Posterior cingulate gyrus (tissue), 11 donors: ENCODE measurements at regions of chr15 and their contacts with region 1.

Region 1: DNA sequence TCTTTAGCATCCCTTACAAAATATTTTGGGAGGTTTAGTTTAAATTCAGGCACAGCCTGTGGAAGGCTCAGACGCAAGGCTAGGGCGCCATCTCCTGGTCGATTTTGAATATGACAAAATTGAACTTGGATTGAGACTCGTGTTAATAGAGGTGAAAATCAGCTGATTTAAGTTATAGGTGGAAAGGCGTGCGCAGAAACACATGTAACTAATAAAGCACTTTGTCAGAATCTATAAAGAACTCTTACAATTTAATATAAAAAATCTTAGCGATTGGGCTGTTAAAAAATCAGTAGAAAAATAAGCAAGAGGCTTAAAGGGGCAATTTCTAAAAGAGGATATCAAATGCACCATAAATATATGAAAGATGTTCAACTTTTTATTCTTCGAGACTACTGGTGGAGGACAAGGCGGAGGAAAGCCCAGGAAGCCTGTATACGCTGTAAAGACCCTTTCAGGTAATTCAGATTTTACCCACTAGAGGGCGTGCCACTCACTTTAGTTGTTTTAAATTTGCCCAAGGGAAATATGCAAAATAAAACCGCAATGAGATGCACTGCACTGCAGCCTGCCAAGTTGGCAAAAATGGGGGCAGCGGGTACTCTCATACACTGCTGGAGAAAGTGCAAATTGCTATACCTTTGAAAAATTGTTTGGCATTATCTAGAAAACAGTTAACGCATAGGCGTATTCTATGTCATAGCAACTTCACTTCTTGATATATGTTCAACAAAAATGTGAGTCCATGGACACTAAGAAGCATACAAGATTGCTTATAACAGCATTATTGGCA is 64.7 kb downstream of the SLC30A4 start:
- DNase-seq: peak in 8 of 10 donors; percentile 45 to 91 (median 70)

Region 2: GRCh38 chr15:45307230-45307924 is 150.5 kb before region 1 on chr15:
- intact Hi-C with region 1: loop called (anchors 5 kb)
- DNase-seq: no peak

Region 3: GRCh38 chr15:45429974-45430792 is 27.7 kb before region 1 on chr15:
- intact Hi-C with region 1: loop called (anchors 1 kb)
- DNase-seq: peak in 7 of 10 donors; percentile 17 to 91 (median 68)

Region 4: GRCh38 chr15:45522328-45523160 is 64.7 kb after region 1 on chr15 and contains the start of gene SLC30A4:
- intact Hi-C with region 1: loop called (anchors 2 kb)
- DNase-seq: peak; percentile 53 to 95 (median 65)

Region 5: DNA sequence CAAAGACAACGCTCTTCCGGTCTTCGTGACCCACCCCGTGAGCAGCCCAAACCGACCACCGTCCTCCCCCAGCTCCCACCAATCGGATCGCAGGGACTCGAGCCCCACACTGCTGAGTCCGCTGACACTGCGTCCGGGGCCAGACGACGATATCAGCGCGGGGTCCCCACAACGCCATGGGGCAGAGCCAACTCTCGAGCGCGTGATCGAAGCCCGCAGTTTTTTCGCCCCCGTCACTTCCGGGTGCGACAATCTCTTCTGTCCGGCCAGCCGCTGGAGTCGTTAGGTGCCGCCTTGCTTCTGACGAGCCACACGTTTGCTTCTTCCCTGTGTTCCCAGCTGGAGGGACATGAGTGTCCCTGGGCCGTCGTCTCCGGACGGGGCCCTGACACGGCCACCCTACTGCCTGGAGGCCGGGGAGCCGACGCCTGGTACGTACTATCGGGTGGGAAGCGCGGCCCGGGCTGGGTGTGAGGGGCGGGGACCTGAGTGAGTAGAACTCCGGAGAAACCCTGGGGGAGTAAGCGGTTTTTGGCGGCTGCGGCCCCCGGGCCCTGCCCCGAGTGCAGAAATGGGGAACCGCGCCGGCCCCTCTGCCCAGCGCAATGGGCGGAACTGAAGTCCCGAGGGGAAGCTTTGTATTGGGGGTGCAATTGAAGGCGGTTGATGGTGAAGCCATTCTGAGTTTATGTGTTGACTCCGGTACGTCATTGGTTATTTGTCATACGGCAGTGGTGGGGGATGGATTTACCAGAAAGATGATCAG is 129.4 kb after region 1 on chr15 and contains the start of gene BLOC1S6:
- intact Hi-C with region 1: loop called (anchors 2 kb)
- DNase-seq: peak; percentile 84 to 98 (median 92)

Region 6: DNA sequence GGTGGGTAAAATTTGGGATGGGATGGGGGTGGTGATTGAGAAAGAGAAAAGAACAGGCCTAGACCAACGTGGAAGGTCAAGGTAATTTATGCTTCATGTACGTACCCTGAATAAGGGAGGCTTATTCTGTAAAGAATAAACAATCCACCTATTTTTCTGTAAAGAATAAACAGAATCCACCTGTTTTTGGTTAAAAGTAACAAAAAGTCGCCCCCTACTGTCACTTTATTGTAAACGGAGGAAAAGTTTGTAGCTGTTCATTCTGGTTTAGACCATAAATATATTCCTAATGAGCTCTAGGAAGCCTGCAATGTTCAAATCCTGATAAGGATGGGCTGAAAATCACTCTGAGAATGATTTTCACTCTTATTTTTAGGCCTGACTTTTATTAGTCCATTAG is 153.5 kb after region 1 on chr15:
- intact Hi-C with region 1: loop called (anchors 1 kb)
- DNase-seq: no peak

Region 7: DNA sequence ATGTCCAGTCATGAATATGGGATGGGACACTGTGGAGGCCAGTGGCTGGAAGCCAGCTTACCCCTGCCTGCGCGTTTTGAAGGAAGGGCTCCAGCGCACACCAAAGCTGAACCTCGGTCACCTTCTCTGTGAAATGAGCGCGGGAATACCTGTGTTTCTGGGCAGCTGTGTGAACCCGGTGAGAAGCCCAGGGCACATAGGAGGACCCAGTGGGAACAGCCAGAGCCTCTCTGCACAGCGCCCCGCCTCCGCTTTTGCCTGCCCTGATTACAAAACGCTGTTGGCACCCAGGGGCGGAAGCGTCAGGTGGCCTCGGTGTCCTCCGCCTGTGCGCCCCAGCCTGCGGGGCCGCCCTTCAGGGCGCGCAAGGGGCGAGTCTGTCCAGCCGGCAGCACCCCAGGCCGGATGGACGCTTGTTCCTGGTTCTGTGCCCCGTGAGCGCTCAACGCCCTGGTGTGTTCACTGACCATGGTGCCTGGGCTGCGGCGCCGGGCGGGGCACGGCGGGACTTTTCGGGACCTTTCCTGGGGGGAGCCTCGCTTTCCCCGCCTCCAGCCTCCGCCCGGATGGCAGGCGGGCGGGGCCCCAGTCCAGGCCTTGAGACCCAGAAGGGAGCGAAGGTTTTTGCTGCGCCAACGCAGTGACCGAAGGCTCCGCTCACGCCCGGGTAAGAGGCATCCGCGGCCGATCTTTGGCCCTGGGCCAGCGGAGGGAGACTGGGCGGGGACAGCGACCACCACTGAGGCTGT is 176.8 kb after region 1 on chr15 and contains the start of gene SQOR:
- intact Hi-C with region 1: no loop called
- DNase-seq: peak in 9 of 10 donors; percentile 19 to 89 (median 35)

Region 8: GRCh38 chr15:45732662-45733061 is 274.8 kb after region 1 on chr15:
- intact Hi-C with region 1: no loop called
- DNase-seq: peak in 2 of 10 donors; percentile 15 to 62